ENCODE measurements at regions of chr20 and their contacts with region 1.

Region 1: GRCh38 chr20:347640-348484 is 951 bp downstream of the NRSN2 start:
- DNase-seq: peak; percentile 94 to 96
- ATAC-seq: peak; percentile 96
- H3K4me3 ChIP-seq: peak overlapping the region; percentile 65 to 75
- H3K27ac ChIP-seq: peak overlapping the region; percentile 30 to 34
- H3K4me1 ChIP-seq: peaks cover 0 to 2% of the 10 kb centered on the region in 2 donors
- H3K27me3 ChIP-seq: no peaks in the 10 kb centered on the region

Region 2: GRCh38 chr20:324177-325044 is 23.5 kb before region 1 on chr20:
- intact Hi-C with region 1: loop called in 1 of 2 experiments (anchors 2 kb)
- DNase-seq: peak; percentile 94 to 98
- ATAC-seq: peak; percentile 92
- H3K4me3 ChIP-seq: peak overlapping the region; percentile 49 to 88
- H3K27ac ChIP-seq: peak overlapping the region; percentile 19 to 88
- H3K4me1 ChIP-seq: no peaks in the 10 kb centered on the region
- H3K27me3 ChIP-seq: no peaks in the 10 kb centered on the region

Region 3: GRCh38 chr20:543369-544152 is 195.7 kb after region 1 on chr20 and contains the start of gene CSNK2A1:
- intact Hi-C with region 1: loop called (anchors 5 kb)
- DNase-seq: peak; percentile 96 to 97
- ATAC-seq: peak; percentile 99
- H3K4me3 ChIP-seq: peak within 1 kb of the TSS; percentile 90 to 99
- H3K27ac ChIP-seq: peak within 1 kb of the TSS in 1 of 2 donors; percentile 91
- H3K4me1 ChIP-seq: peaks cover 0 to 8% of the 10 kb centered on the region in 2 donors
- H3K27me3 ChIP-seq: no peaks in the 10 kb centered on the region
- total RNA-seq, gene CSNK2A1: 73.5 to 98.2 TPM

Region 4: DNA sequence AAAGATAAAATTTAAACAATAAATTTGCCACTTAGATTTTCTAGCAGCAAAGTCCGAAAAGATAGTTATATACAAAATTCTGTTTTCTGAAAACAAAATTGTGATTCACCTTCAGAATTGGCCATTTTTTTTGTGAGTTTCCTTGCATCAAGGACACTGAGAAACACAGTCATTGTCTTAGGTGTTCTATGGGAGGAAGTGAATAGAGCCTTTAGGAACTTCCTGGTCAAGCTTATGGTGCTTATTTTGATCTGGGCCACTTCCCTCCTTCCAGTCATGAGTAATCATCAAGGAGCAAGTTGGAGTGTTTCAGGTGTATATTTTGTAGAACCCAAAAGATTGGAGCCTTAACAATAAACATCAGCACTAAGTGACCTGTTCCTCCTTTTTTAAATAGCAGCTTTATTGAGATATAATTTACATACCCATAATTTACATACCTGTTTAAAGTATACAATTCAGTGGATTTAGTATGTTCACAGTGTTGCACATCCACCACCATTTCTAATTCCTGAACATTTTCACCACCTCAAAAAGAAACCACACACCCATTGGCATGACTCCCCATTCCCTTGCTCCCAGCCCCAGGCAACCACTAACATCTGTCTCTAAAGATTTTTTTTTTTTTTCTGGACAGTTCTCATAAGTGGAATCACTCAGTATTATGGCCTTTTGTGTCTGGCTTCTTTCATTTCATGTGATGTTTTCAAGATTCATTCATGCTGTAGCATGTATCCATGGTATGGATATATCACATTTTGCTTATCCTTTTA is 819.3 kb after region 1 on chr20:
- intact Hi-C with region 1: no loop called
- DNase-seq: no peak
- ATAC-seq: no peak
- H3K4me3 ChIP-seq: no peak overlapping the region
- H3K27ac ChIP-seq: no peak overlapping the region
- H3K4me1 ChIP-seq: no peaks in the 10 kb centered on the region
- H3K27me3 ChIP-seq: no peaks in the 10 kb centered on the region

Measured in aorta (tissue), 5 donors.